Activated CD4-positive, alpha-beta T cell treated with anti-CD3 and anti-CD28 coated beads for 36 hours (primary cell): ENCODE measurements at regions of chr7 and their contacts with region 1.

Region 1: DNA sequence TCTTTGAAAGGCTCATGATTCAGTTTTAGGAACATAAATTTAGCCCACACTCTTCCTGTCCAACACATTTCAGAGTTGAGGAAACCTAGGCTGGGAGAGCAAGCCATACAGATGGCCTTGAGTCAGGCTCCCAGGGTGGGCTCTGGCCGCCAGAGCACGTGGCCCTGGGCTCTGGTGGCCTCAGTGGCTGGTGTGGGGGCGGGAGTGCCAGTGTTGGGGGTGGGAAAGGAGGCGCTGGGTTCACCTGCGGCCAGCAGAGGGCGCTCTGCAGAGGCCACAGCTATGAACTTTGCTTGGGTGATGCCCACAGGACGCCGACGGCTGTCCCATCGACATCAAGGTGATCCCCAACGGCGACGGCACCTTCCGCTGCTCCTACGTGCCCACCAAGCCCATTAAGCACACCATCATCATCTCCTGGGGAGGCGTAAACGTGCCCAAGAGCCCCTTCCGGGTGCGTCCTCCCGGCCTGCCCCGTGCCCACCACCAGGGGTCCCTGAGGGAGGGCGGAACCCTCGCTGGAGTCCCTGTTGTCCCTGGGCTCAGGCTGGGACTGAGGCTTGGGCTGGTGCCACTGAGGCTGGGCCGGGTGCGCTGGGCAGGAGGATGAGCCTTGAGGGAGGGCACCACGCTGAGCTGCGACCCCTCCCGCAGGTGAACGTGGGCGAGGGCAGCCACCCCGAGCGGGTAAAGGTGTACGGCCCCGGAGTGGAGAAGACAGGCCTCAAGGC is 11.9 kb downstream of the FLNC start:
- DNase-seq: peak; percentile 80
- ATAC-seq: peak; percentile 79
- H3K4me3 Mint-ChIP-seq: no peak overlapping the region
- H3K27ac Mint-ChIP-seq: no peak overlapping the region
- H3K4me1 Mint-ChIP-seq: no peaks in the 10 kb centered on the region
- H3K27me3 Mint-ChIP-seq: no peaks in the 10 kb centered on the region

Region 2: GRCh38 chr7:128799451-128799850 is 42.6 kb before region 1 on chr7:
- CTCF ChIA-PET with region 1: no interaction called
- POLR2A ChIA-PET with region 1: no interaction called
- intact Hi-C with region 1: no loop called
- DNase-seq: no peak
- ATAC-seq: no peak
- H3K4me3 Mint-ChIP-seq: no peak overlapping the region
- H3K27ac Mint-ChIP-seq: no peak overlapping the region
- H3K4me1 Mint-ChIP-seq: no peaks in the 10 kb centered on the region
- H3K27me3 Mint-ChIP-seq: no peaks in the 10 kb centered on the region

Region 3: DNA sequence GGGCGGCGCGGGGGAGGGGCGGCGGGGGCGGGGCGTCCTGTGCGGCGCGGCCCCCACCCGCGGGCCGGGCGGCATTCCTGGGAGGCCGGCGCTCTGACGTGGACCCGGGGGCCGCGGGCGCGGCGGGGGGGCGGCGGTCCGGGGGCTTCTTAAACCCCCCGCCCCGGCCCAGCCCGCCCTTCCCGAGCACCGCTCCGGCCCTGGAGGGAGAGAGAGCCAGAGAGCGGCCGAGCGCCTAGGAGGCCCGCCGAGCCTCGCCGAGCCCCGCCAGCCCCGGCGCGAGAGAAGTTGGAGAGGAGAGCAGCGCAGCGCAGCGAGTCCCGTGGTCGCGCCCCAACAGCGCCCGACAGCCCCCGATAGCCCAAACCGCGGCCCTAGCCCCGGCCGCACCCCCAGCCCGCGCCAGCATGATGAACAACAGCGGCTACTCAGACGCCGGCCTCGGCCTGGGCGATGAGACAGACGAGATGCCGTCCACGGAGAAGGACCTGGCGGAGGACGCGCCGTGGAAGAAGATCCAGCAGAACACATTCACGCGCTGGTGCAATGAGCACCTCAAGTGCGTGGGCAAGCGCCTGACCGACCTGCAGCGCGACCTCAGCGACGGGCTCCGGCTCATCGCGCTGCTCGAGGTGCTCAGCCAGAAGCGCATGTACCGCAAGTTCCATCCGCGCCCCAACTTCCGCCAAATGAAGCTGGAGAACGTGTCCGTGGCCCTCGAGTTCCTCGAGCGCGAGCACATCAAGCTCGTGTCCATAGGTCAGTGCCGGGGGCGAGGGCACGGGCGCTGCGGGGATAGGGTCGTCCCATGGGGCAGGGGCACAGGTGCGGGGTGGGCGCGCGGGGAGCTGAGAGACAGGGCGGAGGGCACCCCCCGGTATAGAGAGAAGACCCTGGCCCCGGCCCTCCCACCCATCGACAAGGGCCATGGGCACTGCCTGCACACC is 11.6 kb before region 1 on chr7 and contains the start of gene FLNC:
- CTCF ChIA-PET with region 1: interaction called, 10 read pairs
- POLR2A ChIA-PET with region 1: no interaction called
- intact Hi-C with region 1: no loop called
- DNase-seq: peak; percentile 61
- ATAC-seq: peak; percentile 62
- H3K4me3 Mint-ChIP-seq: peak within 1 kb of the TSS; percentile 30
- H3K27ac Mint-ChIP-seq: no peak within 1 kb of the TSS
- H3K4me1 Mint-ChIP-seq: peaks cover 13% of the 10 kb centered on the region
- H3K27me3 Mint-ChIP-seq: peaks cover 27% of the 10 kb centered on the region
- total RNA-seq, gene FLNC: 0.09 to 0.18 TPM

Region 4: GRCh38 chr7:128883622-128884501 is 41.8 kb after region 1 on chr7:
- CTCF ChIA-PET with region 1: interaction called, 10 read pairs
- POLR2A ChIA-PET with region 1: no interaction called
- intact Hi-C with region 1: loop called in 1 of 2 experiments (anchors 1 kb)
- DNase-seq: peak; percentile 92
- ATAC-seq: peak; percentile 82
- H3K4me3 Mint-ChIP-seq: no peak overlapping the region
- H3K27ac Mint-ChIP-seq: no peak overlapping the region
- H3K4me1 Mint-ChIP-seq: no peaks in the 10 kb centered on the region
- H3K27me3 Mint-ChIP-seq: peaks cover 2% of the 10 kb centered on the region

Region 5: GRCh38 chr7:129030440-129030839 is 188.4 kb after region 1 on chr7:
- CTCF ChIA-PET with region 1: no interaction called
- POLR2A ChIA-PET with region 1: no interaction called
- intact Hi-C with region 1: no loop called
- DNase-seq: no peak
- ATAC-seq: no peak
- H3K4me3 Mint-ChIP-seq: no peak overlapping the region
- H3K27ac Mint-ChIP-seq: no peak overlapping the region
- H3K4me1 Mint-ChIP-seq: peaks cover 39% of the 10 kb centered on the region
- H3K27me3 Mint-ChIP-seq: no peaks in the 10 kb centered on the region